Heart left ventricle (tissue), 16 donors: ENCODE measurements at regions of chr17 and their contacts with region 1.

Region 1: DNA sequence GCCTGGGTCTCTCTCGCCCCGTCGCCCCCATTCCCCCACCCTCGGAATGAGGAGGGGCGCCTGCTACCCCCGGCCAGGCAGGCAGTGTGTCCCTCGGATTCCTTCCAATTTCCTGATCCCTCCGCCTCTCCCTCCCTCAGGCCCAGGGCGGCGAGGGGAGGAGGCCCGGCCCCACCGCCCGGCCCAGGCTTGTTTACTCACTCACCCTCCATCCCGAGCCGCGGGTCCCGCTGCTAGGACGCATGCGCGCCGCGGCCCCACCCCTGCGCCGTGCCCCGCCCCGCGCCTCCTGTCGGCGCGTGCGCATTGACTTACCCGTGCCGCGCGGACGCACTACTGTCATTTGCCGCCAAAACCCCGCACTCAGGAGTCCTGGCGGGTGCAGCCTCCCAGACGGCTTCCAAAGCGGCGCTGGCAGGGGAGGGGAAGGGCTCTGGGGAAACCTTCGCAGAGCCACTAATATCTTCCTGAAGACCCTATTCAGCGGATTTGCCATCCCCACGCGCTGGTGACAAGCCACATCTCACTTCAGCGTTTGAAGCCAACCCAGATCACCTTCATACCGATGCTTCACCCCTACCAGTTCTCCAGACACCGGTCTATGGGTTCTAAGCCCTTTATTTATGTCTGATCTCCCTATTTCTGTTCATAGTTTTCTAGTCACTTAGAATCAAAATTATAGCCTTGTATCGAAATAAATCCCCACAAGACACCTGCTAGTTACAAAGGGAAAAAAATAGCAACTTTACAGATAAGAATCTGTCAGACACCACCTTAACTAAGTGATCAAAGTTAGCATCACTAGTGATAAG is at the start of gene EZH1:
- DNase-seq: peak; percentile 90 to 96 (median 92)
- ATAC-seq: peak; percentile 90 to 98 (median 98)
- H3K4me3 ChIP-seq: peak within 1 kb of the TSS; percentile 61 to 94 (median 80)
- H3K27ac ChIP-seq: peak within 1 kb of the TSS; percentile 83 to 99 (median 92)
- H3K4me1 ChIP-seq: peaks cover 7 to 50% (median 40%) of the 10 kb centered on the region in 12 donors
- H3K27me3 ChIP-seq: no peaks in the 10 kb centered on the region
- CTCF ChIP-seq: no peak
- POLR2A ChIP-seq: peak in 1 of 2 donors; percentile 83
- total RNA-seq, gene EZH1: 29.7 to 50.2 (median 41.5) TPM

Region 2: DNA sequence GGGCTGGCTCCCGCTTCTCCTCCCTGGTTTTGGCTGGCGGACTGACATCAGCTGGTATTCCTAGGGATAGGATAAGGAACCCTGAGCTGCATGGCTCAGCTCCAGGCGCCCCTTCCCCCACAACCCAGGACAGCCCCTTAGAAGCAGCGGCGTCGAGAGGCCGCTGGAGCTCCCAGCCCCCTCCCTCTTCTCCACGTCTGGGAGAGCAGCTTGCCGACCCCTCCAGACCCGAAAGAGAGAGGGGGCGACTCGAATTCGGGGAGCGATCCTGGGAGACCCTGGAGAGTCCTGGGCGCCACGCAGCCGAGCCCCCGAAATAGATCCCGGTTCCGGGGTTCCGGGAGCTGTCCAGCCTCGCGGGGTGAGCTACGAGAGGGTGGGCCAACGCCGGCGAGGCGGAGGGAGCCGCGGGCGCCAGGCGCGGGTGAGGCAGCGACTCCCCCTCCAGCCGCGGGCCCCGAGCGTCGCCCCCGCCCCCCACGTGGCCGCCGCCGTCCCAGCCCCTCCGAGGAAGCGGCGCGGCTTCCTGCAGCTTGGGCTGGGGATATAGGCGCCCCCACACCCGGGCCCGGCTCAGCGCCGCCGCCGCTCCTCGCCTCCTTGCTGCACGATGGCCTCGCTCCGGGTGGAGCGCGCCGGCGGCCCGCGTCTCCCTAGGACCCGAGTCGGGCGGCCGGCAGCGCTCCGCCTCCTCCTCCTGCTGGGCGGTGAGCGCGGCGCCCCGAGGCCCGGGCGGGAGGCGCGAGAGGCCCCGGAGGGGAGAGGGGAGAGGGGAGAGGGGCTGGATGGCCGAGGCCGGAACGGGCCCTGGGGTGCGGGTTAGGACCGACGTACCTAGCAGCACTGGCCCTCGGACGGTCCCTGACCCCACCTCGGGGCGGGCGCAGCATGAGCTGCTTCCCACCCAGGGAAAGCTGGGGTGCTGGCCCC is 15.9 kb after region 1 on chr17 and contains the start of gene RAMP2:
- intact Hi-C with region 1: loop called in 3 of 10 experiments (anchors 1 to 2 kb)
- DNase-seq: peak in 3 of 5 donors; percentile 58 to 63 (median 60)
- ATAC-seq: peak in 3 of 4 donors; percentile 12 to 56 (median 52)
- H3K4me3 ChIP-seq: peak within 1 kb of the TSS; percentile 44 to 92 (median 70)
- H3K27ac ChIP-seq: peak within 1 kb of the TSS; percentile 78 to 98 (median 90)
- H3K4me1 ChIP-seq: peaks cover 3 to 36% (median 16%) of the 10 kb centered on the region in 12 donors
- H3K27me3 ChIP-seq: peaks cover 0 to 27% (median 2%) of the 10 kb centered on the region in 9 donors
- CTCF ChIP-seq: no peak
- POLR2A ChIP-seq: peak in 1 of 2 donors; percentile 45
- total RNA-seq, gene RAMP2: 31.2 to 58.3 (median 39.7) TPM

Region 3: GRCh38 chr17:42819944-42820535 is 75.0 kb after region 1 on chr17:
- intact Hi-C with region 1: loop called in 1 of 10 experiments (anchors 10 kb)
- DNase-seq: peak; percentile 28 to 67 (median 44)
- ATAC-seq: no peak
- H3K4me3 ChIP-seq: no peak overlapping the region
- H3K27ac ChIP-seq: no peak overlapping the region
- H3K4me1 ChIP-seq: peaks cover 6 to 28% (median 16%) of the 10 kb centered on the region in 12 donors
- H3K27me3 ChIP-seq: no peaks in the 10 kb centered on the region
- CTCF ChIP-seq: peak; percentile 39 to 70 (median 62)
- POLR2A ChIP-seq: no peak